Natural killer cell (primary cell): ENCODE measurements at regions of chr3 and their contacts with region 1.

Region 1: GRCh38 chr3:19946832-19947548 is at the start of gene RAB5A:
- DNase-seq: peak; percentile 87 to 99
- ATAC-seq: peak; percentile 81 to 92 (median 86)
- H3K4me3 ChIP-seq: peak within 1 kb of the TSS; percentile 89
- H3K4me3 Mint-ChIP-seq: peak within 1 kb of the TSS; percentile 97
- H3K27ac ChIP-seq: peak within 1 kb of the TSS; percentile 97
- H3K27ac Mint-ChIP-seq: peak within 1 kb of the TSS; percentile 96 to 97
- H3K4me1 ChIP-seq: peaks cover 19% of the 10 kb centered on the region
- H3K4me1 Mint-ChIP-seq: peaks cover 35 to 51% of the 10 kb centered on the region in 2 donors
- H3K27me3 ChIP-seq: no peaks in the 10 kb centered on the region
- H3K27me3 Mint-ChIP-seq: no peaks in the 10 kb centered on the region
- CTCF ChIP-seq: no peak
- total RNA-seq, gene RAB5A: 102 to 109 (median 102) TPM

Region 2: DNA sequence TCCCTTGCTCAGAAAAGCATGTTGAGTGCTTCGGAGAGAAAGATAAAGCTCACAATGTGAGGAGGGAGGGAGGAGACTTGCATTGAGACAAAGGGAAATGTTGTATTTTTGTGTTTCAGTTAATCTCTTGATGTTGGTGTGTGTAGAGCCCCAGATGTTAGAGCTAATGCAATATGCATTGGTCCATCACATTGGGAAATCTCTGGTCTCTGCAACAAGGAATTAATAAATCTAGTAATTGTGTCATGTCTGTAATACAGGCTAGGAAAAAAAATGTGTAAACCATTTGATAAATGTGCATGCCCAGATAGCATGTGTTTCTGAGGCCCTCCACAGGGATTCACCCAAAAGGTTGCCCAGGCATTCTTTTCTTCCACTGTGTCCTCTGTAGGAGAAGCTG is 1029.1 kb before region 1 on chr3:
- intact Hi-C with region 1: no loop called
- DNase-seq: no peak
- ATAC-seq: no peak
- H3K4me3 ChIP-seq: no peak overlapping the region
- H3K4me3 Mint-ChIP-seq: no peak overlapping the region
- H3K27ac ChIP-seq: no peak overlapping the region
- H3K27ac Mint-ChIP-seq: no peak overlapping the region
- H3K4me1 ChIP-seq: no peaks in the 10 kb centered on the region
- H3K4me1 Mint-ChIP-seq: no peaks in the 10 kb centered on the region
- H3K27me3 ChIP-seq: no peaks in the 10 kb centered on the region
- H3K27me3 Mint-ChIP-seq: peaks cover 10 to 24% of the 10 kb centered on the region in 2 donors
- CTCF ChIP-seq: no peak

Region 3: DNA sequence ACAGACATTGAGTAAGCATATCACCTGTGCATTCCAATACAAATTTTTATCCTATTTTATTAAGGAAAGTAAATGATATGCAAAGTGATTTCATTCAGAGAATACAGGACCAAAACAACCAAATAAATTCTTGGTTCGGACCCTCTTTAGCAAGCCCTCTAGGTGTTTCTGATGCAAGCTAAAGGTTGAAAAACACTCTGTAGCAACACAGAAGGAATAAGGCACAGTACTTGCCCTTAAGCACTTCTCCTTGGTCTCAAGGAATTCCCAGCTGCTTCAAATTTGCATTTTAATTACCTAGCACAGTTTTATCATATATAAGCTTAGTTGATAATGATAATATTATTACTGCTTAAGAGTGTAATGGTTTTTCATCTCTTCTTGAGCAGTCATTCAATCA is 510.2 kb before region 1 on chr3:
- intact Hi-C with region 1: no loop called
- DNase-seq: no peak
- ATAC-seq: no peak
- H3K4me3 ChIP-seq: no peak overlapping the region
- H3K4me3 Mint-ChIP-seq: no peak overlapping the region
- H3K27ac ChIP-seq: no peak overlapping the region
- H3K27ac Mint-ChIP-seq: no peak overlapping the region
- H3K4me1 ChIP-seq: no peaks in the 10 kb centered on the region
- H3K4me1 Mint-ChIP-seq: no peaks in the 10 kb centered on the region
- H3K27me3 ChIP-seq: no peaks in the 10 kb centered on the region
- H3K27me3 Mint-ChIP-seq: no peaks in the 10 kb centered on the region
- CTCF ChIP-seq: no peak

Region 4: DNA sequence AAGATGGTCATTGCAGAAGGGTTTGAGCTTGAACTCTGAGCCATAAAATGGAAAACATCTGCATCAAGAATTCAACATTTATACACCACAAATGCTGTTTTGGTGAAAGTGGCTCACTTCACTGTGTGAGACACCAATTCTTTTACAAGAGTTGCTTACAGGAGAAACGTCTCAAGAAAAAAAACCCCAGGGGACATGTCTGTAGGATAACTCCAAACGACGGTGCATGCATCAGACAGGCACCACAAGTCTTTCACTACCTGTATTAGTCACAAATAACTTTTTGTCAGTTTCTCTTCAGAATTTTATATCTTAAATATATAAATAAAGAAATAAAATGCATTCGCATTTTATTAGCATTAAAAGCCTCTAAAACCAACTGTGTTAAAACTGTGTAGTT is 177.3 kb before region 1 on chr3:
- intact Hi-C with region 1: no loop called
- DNase-seq: no peak
- ATAC-seq: no peak
- H3K4me3 ChIP-seq: no peak overlapping the region
- H3K4me3 Mint-ChIP-seq: no peak overlapping the region
- H3K27ac ChIP-seq: no peak overlapping the region
- H3K27ac Mint-ChIP-seq: no peak overlapping the region
- H3K4me1 ChIP-seq: no peaks in the 10 kb centered on the region
- H3K4me1 Mint-ChIP-seq: no peaks in the 10 kb centered on the region
- H3K27me3 ChIP-seq: no peaks in the 10 kb centered on the region
- H3K27me3 Mint-ChIP-seq: no peaks in the 10 kb centered on the region
- CTCF ChIP-seq: no peak

Region 5: GRCh38 chr3:20104167-20104661 is 157.2 kb after region 1 on chr3:
- intact Hi-C with region 1: loop called (anchors 2 kb)
- DNase-seq: peak; percentile 23 to 79
- ATAC-seq: peak; percentile 76 to 85 (median 78)
- H3K4me3 ChIP-seq: peak overlapping the region; percentile 10
- H3K4me3 Mint-ChIP-seq: peak overlapping the region; percentile 78
- H3K27ac ChIP-seq: peak overlapping the region; percentile 69
- H3K27ac Mint-ChIP-seq: peak overlapping the region; percentile 90
- H3K4me1 ChIP-seq: peaks cover 49% of the 10 kb centered on the region
- H3K4me1 Mint-ChIP-seq: peaks cover 69 to 75% of the 10 kb centered on the region in 2 donors
- H3K27me3 ChIP-seq: no peaks in the 10 kb centered on the region
- H3K27me3 Mint-ChIP-seq: no peaks in the 10 kb centered on the region
- CTCF ChIP-seq: no peak

Region 6: DNA sequence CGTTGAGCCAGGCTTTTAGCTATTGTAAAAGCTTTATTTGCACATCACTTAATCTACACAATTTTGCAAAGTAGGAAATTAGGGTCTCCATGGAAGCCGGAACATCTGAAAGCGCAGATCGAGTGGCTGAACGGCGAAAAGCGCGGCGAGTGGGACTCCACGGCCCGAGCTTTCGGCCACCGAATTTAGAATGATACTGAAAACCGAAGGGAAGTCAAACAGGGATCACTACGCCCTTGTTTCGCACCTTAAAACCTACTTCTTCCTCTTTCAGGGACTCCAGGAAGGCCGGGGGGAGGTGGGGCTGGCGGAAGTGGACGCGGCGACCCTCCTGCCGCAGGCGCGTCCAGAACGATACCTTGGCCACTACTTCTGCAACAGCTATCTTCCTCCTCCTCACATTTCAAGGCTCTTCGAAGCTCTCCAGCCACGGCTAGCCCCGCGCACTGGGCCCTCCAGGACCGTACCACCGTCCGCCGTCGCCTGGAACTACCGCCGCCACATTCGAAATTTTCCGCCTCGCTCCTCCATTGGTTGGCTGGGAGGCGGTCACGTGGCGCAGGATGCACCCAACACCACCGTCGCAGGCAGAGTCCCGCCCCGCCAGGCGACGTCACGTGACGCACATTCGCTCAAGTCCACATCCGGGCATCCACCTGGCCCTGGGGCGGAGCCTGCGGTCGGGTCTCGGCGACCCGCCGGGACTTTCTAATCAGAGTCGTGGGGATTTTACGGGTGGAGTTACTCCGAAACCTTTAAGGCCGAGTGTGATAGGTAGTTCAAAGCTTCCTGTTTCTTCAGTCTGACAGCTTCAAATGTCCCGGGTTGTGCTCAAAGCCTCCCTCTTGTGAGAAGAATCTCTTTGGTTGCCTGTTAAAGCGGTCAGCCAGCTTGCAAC is 239.0 kb after region 1 on chr3 and contains the start of gene SGO1:
- intact Hi-C with region 1: loop called (anchors 1 kb)
- DNase-seq: peak; percentile 100
- ATAC-seq: peak; percentile 90 to 97 (median 93)
- H3K4me3 ChIP-seq: peak within 1 kb of the TSS; percentile 77
- H3K4me3 Mint-ChIP-seq: no peak within 1 kb of the TSS
- H3K27ac ChIP-seq: peak within 1 kb of the TSS; percentile 95
- H3K27ac Mint-ChIP-seq: no peak within 1 kb of the TSS
- H3K4me1 ChIP-seq: peaks cover 12% of the 10 kb centered on the region
- H3K4me1 Mint-ChIP-seq: no peaks in the 10 kb centered on the region
- H3K27me3 ChIP-seq: no peaks in the 10 kb centered on the region
- H3K27me3 Mint-ChIP-seq: no peaks in the 10 kb centered on the region
- CTCF ChIP-seq: no peak
- total RNA-seq, gene SGO1: 0.55 to 1.4 (median 0.94) TPM